ENCODE measurements at regions of chr15 and their contacts with region 1.

Region 1: DNA sequence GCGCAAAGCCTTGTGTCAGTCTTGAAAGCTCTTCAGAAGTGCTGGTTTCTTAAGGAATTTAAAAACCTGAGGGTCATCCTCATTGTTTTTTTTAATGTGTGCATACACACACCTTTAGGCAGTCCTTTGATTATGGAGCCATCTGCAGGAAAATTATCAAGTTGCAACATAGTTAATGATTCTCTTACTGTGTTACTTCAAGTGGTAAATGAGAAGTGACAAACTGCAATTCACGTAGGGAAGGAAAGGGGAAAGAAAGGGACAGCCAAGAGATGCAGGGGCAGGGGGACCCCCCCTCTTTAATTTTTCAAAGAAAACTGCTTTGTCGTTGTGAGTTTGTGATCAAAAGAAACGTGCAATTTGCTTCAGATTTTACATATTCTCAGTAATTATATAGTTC is 162.4 kb upstream of the CGNL1 start:
- DNase-seq: peak; percentile 41
- ATAC-seq: peak; percentile 67
- H3K4me3 ChIP-seq: no peak overlapping the region
- H3K27ac ChIP-seq: no peak overlapping the region
- H3K4me1 ChIP-seq: peaks cover 12% of the 10 kb centered on the region
- H3K27me3 ChIP-seq: no peaks in the 10 kb centered on the region
- CTCF ChIP-seq: peak; percentile 67
- EP300 ChIP-seq: no peak
- POLR2A ChIP-seq: no peak
- RAD21 ChIP-seq: no peak; the same call in 1 of the 2 replicates

Region 2: DNA sequence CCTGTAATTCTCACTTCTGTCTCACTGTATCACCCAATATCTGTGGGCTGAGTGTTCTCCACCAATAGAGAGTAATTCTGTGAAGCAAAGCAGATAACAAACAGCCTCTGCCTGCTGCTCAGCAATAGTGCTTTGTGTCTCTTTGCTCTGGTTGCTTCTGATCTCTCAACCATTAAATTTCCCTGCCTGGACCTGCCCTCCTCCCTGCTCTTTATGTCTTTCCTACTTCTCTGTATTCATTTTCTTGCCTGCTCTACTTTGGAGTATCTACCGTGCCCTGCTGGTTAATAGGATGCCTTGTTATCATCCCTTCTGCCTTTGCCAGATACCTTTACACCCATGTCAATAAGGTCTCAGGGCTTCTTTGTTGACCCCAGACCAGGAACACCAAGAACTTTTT is 59.5 kb after region 1 on chr15:
- CTCF ChIA-PET with region 1: no interaction called
- POLR2A ChIA-PET with region 1: no interaction called
- in situ Hi-C with region 1: loop called (anchors 10 kb)
- intact Hi-C with region 1: no loop called
- DNase-seq: no peak
- ATAC-seq: no peak
- H3K4me3 ChIP-seq: no peak overlapping the region
- H3K27ac ChIP-seq: no peak overlapping the region
- H3K4me1 ChIP-seq: no peaks in the 10 kb centered on the region
- H3K27me3 ChIP-seq: no peaks in the 10 kb centered on the region
- CTCF ChIP-seq: no peak
- EP300 ChIP-seq: no peak
- POLR2A ChIP-seq: no peak
- RAD21 ChIP-seq: no peak